Posterior cingulate gyrus (tissue), 11 donors: ENCODE measurements at regions of chr5 and their contacts with region 1.

Region 1: GRCh38 chr5:80960531-80961375 is 590 bp downstream of the RASGRF2 start:
- DNase-seq: peak in 8 of 10 donors; percentile 13 to 90 (median 67)

Region 2: DNA sequence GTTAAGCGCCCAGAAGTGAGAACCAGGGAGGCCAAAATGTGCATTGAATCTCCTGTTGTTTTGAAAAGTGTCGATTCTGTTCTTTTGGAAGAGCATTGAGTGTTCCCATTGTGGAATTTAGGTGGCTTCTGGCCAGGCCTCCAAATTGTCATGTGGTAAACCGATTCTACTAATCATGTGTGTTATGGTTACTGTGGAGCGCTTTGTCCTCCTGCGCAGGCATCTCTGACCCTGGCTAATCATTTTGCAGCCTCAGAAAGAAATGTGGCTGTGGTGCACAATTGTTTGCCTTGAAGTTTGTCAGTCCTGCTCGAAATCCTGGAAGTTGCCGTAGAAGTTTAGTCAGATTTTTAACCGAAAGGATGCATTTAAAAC is 120.7 kb after region 1 on chr5:
- intact Hi-C with region 1: loop called (anchors 10 kb)
- DNase-seq: peak in 5 of 10 donors; percentile 9 to 84 (median 51)

Region 3: GRCh38 chr5:81165493-81166119 is 204.9 kb after region 1 on chr5:
- intact Hi-C with region 1: loop called (anchors 10 kb)
- DNase-seq: peak in 8 of 10 donors; percentile 47 to 93 (median 68)

Region 4: GRCh38 chr5:81194633-81195333 is 234.0 kb after region 1 on chr5:
- intact Hi-C with region 1: loop called (anchors 10 kb)
- DNase-seq: peak; percentile 61 to 97 (median 85)